OCI-LY7 (cell line): ENCODE measurements at regions of chr2 and their contacts with region 1.

Region 1: GRCh38 chr2:30336978-30337841 is 105.9 kb downstream of the LBH start:
- DNase-seq: peak; percentile 90
- H3K4me3 ChIP-seq: peak overlapping the region; percentile 48
- H3K27ac ChIP-seq: peak overlapping the region; percentile 87
- H3K4me1 ChIP-seq: peaks cover 37% of the 10 kb centered on the region
- CTCF ChIP-seq: no peak

Region 2: GRCh38 chr2:29923110-29923721 is 414.0 kb before region 1 on chr2:
- CTCF ChIA-PET with region 1: no interaction called
- POLR2A ChIA-PET with region 1: no interaction called
- intact Hi-C with region 1: no loop called
- DNase-seq: peak; percentile 71
- H3K4me3 ChIP-seq: no peak overlapping the region
- H3K27ac ChIP-seq: no peak overlapping the region
- H3K4me1 ChIP-seq: no peaks in the 10 kb centered on the region
- CTCF ChIP-seq: peak; percentile 97

Region 3: DNA sequence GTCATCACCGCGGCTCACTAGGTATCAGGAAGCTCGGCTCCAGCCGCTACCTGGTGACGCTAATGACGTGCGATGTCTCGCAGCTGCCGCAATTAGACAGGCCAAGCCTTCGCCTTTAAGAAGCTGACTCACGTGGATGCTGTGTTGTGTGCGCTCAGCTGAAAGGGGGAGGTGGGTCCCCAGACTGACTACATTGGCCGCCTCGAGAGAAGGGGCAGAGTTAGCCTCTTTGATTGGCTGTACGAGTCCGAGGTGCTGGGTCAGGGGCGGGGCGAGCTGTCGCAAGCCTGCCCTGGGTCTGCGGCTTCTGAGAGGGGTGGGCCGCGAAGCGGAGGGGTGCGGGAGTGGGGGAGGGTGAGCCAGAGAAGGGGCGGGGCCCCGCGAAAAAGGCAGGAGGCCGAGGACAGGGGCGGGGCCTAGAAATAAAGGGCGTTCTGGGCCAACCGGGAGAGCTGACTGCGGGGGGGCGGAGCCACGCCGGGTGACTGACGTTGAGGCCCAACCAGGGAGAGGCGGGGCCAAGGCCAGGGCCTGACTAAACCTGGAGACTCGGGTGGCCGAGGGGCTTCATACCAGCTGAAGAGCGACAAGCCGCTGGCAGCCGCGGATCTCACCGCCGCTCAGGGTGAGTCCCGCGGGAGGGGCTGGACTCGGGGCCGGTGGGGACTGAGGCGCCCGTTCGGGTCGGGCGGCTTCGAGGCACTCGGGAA is 190.6 kb before region 1 on chr2 and contains the start of gene YPEL5:
- CTCF ChIA-PET with region 1: no interaction called
- POLR2A ChIA-PET with region 1: interaction called, 5 read pairs
- intact Hi-C with region 1: loop called (anchors 5 kb)
- DNase-seq: peak; percentile 99
- H3K4me3 ChIP-seq: peak within 1 kb of the TSS; percentile 72
- H3K27ac ChIP-seq: peak within 1 kb of the TSS; percentile 92
- H3K4me1 ChIP-seq: peaks cover 46% of the 10 kb centered on the region
- CTCF ChIP-seq: no peak
- total RNA-seq, gene YPEL5: 37.9 and 38.9 TPM in 2 replicates

Region 4: DNA sequence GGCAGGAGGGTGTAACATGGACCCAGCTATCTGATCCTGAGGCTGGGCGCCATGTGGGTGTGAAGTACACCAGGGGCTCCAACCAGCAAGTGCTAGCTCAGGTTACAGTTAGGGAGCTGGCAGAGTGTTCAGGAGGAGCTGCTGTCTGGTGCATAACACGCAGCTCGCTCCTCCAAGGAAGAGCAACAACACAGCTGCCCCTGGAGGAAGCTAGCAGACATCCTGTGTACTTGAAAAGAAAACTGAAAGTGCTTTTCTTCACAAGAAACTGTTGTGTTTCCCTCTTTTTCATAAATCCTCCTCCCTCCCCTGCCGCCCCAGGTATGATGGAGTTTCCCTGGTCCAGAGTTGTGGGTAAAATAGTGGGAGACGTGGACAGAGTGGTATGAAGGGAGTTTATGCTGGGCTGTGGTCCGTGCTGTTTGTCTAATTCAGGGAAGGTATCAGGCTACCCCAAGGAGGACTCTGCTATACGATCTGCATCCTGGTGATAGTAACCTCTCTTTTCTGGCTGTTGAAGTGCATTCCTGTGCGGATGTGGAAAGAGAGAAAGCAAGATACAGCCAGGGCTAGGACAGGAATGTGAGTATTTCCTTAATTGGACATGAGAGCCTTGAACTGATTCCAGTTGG is 112.0 kb before region 1 on chr2:
- CTCF ChIA-PET with region 1: interaction called, 3 read pairs
- POLR2A ChIA-PET with region 1: interaction called, 7 read pairs
- intact Hi-C with region 1: loop called (anchors 2 kb)
- DNase-seq: peak; percentile 82
- H3K4me3 ChIP-seq: peak overlapping the region; percentile 59
- H3K27ac ChIP-seq: peak overlapping the region; percentile 30
- H3K4me1 ChIP-seq: peaks cover 30% of the 10 kb centered on the region
- CTCF ChIP-seq: 0 out of 2 replicates have a peak, but pooled peaks have one; percentile 21

Region 5: DNA sequence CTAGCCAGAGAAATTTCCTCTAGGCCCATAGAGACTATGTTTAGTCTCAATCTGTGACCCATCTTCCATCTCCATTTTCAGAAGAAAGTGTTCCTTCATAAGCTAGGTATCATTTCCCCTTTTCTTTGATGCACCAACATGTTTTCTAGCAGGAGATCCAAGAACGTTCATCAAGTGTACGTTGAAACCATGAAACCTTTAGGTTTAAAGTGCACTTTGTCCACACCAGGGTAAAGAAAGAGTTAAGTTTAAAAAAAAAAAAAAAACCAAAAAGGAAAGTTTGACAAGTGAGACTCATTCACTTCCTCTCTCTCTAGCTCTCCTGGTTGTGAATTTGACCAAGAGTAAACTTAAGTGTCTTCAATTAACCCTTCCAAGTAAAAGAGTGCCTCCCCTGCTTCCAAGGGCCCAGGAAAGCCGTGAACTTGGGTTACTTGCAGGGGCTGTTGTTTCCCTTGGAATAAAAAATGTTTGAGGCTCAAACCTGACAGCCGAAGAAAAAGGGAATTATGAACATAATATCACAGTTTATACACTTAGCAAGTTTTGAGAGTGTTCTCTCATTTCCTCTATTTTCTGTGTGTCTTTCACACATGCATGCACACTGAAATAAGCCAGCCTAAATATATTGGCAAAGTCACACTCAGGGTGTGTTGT is 49.2 kb before region 1 on chr2:
- CTCF ChIA-PET with region 1: interaction called, 3 read pairs
- POLR2A ChIA-PET with region 1: interaction called, 17 read pairs
- intact Hi-C with region 1: loop called (anchors 1 kb)
- DNase-seq: peak; percentile 70
- H3K4me3 ChIP-seq: peak overlapping the region; percentile 45
- H3K27ac ChIP-seq: peak overlapping the region; percentile 76
- H3K4me1 ChIP-seq: peaks cover 33% of the 10 kb centered on the region
- CTCF ChIP-seq: no peak

Region 6: DNA sequence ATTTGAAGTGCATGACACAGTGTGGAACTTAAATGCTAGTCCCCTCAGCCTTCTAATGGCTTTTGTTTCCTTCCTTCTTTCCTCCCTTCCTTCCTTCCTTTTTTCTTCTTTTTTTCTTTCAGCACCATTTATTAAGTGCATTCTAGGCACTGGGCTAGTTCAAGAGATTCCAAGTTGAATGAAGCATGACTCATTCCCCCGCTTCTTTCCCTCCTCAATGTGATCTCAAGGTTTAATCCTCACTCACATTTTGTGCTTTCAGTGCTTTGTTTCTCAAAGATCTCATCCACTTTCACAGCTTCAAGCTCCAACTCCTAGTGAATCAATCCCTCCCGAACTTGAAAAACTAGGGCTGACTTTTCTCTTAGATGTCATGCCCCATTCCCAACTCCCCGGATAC is 15.7 kb before region 1 on chr2:
- CTCF ChIA-PET with region 1: interaction called, 10 read pairs
- POLR2A ChIA-PET with region 1: interaction called, 7 read pairs
- intact Hi-C with region 1: no loop called
- DNase-seq: no peak
- H3K4me3 ChIP-seq: no peak overlapping the region
- H3K27ac ChIP-seq: no peak overlapping the region
- H3K4me1 ChIP-seq: no peaks in the 10 kb centered on the region
- CTCF ChIP-seq: no peak

Region 7: DNA sequence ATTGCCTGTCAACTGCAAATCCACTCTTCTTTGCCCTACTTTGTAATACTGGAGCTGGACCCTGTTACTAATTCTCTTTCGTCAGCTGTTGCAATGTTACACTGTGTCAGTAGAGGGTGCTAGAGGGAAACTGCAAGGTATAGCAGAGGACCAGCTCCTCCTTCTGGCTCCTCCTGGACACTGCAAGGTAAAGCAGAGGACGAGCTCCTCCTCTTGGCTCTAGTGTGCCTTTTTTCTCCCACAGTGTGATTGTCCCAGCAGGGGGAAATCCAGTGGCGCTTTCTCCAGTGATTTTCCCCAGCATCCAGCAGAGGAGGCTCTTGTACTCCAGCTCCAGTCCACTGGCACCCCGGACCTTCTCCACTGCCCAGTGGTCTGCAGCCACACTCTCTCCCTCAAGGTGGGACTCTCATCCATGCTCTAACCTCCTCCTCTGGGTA is 374.5 kb after region 1 on chr2:
- CTCF ChIA-PET with region 1: interaction called, 5 read pairs
- POLR2A ChIA-PET with region 1: no interaction called
- intact Hi-C with region 1: loop called (anchors 5 kb)
- DNase-seq: peak; percentile 93
- H3K4me3 ChIP-seq: no peak overlapping the region
- H3K27ac ChIP-seq: no peak overlapping the region
- H3K4me1 ChIP-seq: peaks cover 4% of the 10 kb centered on the region
- CTCF ChIP-seq: peak; percentile 97